ENCODE measurements at regions of chr12 and their contacts with region 1.

Region 1: GRCh38 chr12:49967042-49967776 is 5.5 kb downstream of the AQP5 start:
- DNase-seq: peak; percentile 66
- H3K4me3 ChIP-seq: peak overlapping the region; percentile 5 to 45 (median 21)
- H3K27ac ChIP-seq: no peak overlapping the region
- H3K4me1 ChIP-seq: peaks cover 32% of the 10 kb centered on the region
- H3K27me3 ChIP-seq: no peaks in the 10 kb centered on the region
- CTCF ChIP-seq: peak; percentile 85 to 88

Region 2: GRCh38 chr12:49866859-49867579 is 100.2 kb before region 1 on chr12:
- CTCF ChIA-PET with region 1: interaction called, 42 read pairs
- dilution Hi-C with region 1: no loop called
- in situ Hi-C with region 1: no loop called
- intact Hi-C with region 1: loop called (anchors 1 kb)
- DNase-seq: peak; percentile 50
- H3K4me3 ChIP-seq: no peak overlapping the region
- H3K27ac ChIP-seq: no peak overlapping the region
- H3K4me1 ChIP-seq: no peaks in the 10 kb centered on the region
- H3K27me3 ChIP-seq: peaks cover 2% of the 10 kb centered on the region
- CTCF ChIP-seq: peak; percentile 97 to 99

Region 3: GRCh38 chr12:49945394-49946080 is 21.7 kb before region 1 on chr12:
- CTCF ChIA-PET with region 1: interaction called, 14 read pairs
- dilution Hi-C with region 1: no loop called
- in situ Hi-C with region 1: no loop called
- intact Hi-C with region 1: no loop called
- DNase-seq: peak; percentile 67
- H3K4me3 ChIP-seq: no peak overlapping the region
- H3K27ac ChIP-seq: no peak overlapping the region
- H3K4me1 ChIP-seq: peaks cover 6% of the 10 kb centered on the region
- H3K27me3 ChIP-seq: no peaks in the 10 kb centered on the region
- CTCF ChIP-seq: peak; percentile 77 to 85

Region 4: DNA sequence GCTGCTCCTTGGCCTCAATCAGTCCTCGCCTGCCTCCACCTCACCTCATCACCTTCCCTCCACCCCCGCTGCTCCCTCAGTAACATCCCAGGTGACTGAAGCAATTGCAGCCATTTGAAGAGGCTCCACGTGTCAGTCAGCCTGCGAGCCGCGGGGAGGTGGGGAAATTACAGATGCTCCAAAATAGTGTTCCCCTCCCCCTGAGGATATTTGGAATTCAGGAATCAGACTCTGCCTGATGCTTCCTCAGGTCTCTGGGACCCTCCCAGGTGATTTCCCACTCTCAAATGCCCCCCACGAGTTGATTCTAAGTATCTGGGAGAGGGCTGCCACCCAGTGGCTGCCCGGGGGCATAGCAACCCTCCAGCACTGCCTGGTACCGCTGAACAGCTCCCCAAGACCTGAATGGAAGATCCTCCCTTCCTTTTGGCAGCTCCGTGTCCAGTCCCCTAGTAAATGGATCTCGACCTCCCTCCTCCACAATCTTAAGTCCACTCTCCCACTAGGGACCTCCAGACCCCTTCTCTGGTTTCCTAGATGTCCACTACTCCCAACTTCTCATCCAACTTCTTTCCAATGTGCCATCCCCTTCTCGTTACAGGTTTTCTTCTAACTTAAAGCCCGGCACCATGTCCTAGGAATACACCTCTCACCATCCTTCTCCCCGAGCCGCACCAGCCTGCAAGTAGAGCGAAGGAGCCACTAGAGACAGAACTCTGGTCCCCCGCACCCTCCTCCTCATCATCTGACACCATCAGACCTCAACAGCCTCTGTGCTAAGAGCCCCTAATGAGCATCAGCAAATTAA is 88.8 kb after region 1 on chr12:
- CTCF ChIA-PET with region 1: interaction called, 22 read pairs
- dilution Hi-C with region 1: no loop called
- in situ Hi-C with region 1: loop called (anchors 5 kb)
- intact Hi-C with region 1: loop called (anchors 1 kb)
- DNase-seq: peak; percentile 52
- H3K4me3 ChIP-seq: peak overlapping the region in 1 of 3 experiments; percentile 16
- H3K27ac ChIP-seq: no peak overlapping the region
- H3K4me1 ChIP-seq: peaks cover 11% of the 10 kb centered on the region
- H3K27me3 ChIP-seq: peaks cover 3% of the 10 kb centered on the region
- CTCF ChIP-seq: peak; percentile 91 to 98

Region 5: DNA sequence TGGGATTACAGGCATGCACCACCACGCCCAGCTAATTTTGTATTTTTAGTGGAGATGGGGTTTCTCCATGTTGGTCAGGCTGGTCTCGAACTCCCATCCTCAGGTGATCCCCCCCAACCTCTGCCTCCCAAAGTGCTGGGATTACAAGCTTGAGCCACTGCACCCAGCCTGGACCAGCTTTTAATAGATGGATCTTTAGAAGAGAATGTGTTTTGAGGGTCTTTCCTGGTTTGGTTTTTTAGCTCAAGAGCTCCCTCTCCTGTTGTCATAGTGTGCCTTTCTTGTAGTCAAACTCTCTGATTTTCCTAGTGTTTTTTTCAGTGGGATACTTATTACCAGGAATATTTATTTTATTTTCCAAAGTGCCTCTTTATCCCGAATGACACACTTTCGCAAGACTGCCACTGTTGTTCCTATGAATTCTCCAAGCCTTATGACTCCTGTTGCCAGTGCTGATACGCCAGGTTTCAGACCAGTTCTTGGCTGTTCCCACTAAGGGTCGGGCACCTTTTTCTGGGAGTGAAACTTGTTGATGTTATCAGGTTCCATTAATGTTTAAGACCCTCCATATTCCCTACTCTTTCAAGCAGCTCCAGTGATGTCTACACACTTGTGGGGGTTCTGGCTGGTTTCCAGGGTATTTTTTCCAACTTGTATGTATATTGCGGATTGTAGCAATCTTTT is 347.6 kb after region 1 on chr12:
- CTCF ChIA-PET with region 1: no interaction called
- dilution Hi-C with region 1: no loop called
- in situ Hi-C with region 1: no loop called
- intact Hi-C with region 1: loop called (anchors 1 kb)
- DNase-seq: no peak
- H3K4me3 ChIP-seq: no peak overlapping the region
- H3K27ac ChIP-seq: no peak overlapping the region
- H3K4me1 ChIP-seq: peaks cover 7% of the 10 kb centered on the region
- H3K27me3 ChIP-seq: no peaks in the 10 kb centered on the region
- CTCF ChIP-seq: peak; percentile 63 to 65